Tibial artery (tissue), 4 donors: ENCODE measurements at regions of chr17 and their contacts with region 1.

Region 1: DNA sequence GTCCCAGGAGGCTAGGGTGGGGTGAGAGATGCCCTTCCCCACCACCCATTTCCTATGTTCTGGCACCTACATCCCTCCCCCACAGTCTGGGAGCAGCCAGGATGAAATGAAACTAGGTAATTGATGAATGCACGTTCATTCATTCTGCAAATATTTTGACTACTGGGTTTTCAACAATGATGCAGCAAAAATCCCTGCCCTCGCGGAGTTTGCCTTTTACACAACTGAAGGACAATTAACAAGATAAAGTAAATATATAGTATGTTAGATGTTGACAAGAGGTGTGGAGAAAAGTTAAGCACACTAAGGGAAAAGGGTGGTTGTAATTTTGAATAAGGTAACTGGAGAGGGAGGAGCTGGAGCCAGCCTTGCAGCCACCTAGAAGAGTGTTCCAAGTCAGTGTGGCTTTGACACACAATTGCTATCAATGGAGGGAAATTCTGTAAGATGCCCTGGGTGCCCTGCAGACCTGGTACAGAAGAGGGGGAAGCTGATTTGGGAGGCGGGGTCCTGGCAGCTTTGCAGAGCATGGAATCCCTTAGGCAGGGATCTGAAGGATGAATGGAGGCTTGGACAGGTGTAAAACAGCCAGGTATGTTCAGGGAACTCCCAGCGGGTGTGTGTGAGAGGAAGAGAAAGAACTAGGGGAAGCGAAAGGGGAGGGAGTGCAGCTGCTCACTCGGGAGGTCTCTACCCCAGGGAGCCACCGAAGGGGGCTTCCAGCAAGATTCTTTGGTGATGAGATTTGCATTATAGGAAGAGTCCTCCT is 2.5 kb downstream of the TMEM92 start:
- DNase-seq: no peak
- H3K4me3 ChIP-seq: no peak overlapping the region
- H3K27ac ChIP-seq: no peak overlapping the region
- H3K4me1 ChIP-seq: peaks cover 0 to 14% (median 12%) of the 10 kb centered on the region in 4 donors
- H3K27me3 ChIP-seq: peaks cover 0 to 37% of the 10 kb centered on the region in 2 donors
- CTCF ChIP-seq: no peak

Region 2: GRCh38 chr17:50297407-50297865 is 20.7 kb after region 1 on chr17:
- intact Hi-C with region 1: no loop called
- DNase-seq: peak; percentile 77 to 85
- H3K4me3 ChIP-seq: no peak overlapping the region
- H3K27ac ChIP-seq: no peak overlapping the region
- H3K4me1 ChIP-seq: no peaks in the 10 kb centered on the region
- H3K27me3 ChIP-seq: no peaks in the 10 kb centered on the region
- CTCF ChIP-seq: peak; percentile 95 to 99

Region 3: DNA sequence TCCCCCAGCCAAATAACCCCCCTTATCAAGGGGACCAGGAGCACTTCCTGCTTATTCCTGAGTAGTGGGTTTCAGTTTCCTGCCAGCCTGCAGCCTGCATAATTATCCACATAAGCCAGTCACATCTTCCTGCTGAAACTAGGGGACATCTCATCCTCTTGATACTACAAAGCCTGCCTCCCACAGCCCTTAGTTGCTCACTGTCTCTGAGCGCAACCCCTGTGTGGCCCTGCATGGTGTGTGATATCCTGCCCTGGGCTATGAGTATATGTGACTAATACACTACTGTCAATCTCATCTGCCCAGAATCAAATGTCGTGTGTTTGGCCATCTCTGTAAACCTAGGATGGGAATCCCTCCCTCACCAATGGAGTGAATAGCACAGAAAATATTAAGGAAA is 61.2 kb after region 1 on chr17:
- intact Hi-C with region 1: loop called (anchors 2 kb)
- DNase-seq: no peak
- H3K4me3 ChIP-seq: no peak overlapping the region
- H3K27ac ChIP-seq: no peak overlapping the region
- H3K4me1 ChIP-seq: no peaks in the 10 kb centered on the region
- H3K27me3 ChIP-seq: peaks cover 0 to 3% of the 10 kb centered on the region in 2 donors
- CTCF ChIP-seq: no peak